A673 (cell line): ENCODE measurements at regions of chr5 and their contacts with region 1.

Region 1: DNA sequence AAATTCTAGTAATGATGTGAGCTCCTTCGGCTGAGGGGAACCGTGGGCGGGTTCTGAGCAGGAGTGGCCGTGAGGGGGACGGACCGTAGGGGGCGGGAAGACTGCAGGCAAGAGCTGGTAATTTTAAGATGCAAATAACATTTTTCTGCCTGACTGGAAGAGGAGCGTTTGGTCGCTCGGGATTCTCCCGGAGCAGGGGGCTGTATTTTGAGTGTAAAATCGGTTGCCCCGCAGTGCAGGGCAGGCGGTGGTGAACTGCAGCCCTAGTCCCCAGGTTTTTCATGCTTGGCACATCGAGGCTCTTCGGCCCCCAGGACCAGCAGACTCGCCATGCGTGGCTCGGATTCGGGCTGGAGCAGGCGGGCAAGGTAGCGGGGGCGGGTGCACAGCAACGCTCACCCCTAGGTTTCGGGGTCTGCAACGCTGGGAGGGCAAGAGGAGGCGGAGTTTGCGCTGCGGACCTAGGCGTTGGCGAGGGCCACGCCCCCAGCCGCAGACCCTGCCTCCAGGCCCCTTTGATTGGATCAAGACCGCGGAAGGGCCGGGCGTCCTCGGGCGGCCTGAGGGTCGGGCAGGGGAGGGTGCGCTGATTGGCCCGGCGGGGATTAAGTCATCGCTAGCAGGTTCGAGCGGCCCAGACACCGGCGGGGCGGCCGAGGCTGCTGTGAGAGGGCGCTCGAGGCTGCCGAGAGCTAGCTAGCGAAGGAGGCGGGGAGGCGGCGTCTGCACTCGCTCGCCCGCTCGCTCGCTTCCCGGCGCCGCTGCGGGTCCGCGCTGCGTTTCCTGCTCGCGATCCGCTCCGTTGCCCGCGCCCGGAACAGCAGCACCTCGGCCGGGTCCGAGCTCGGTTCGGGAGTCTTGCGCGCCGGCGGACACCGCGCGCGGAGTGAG is at the start of gene ARHGAP26:
- DNase-seq: peak; percentile 98
- H3K4me3 ChIP-seq: peak within 1 kb of the TSS; percentile 66
- H3K27ac ChIP-seq: peak within 1 kb of the TSS; percentile 58
- H3K4me1 ChIP-seq: peaks cover 15% of the 10 kb centered on the region
- H3K27me3 ChIP-seq: no peaks in the 10 kb centered on the region
- CTCF ChIP-seq: no peak; the same call in 1 of the 2 replicates
- total RNA-seq, gene ARHGAP26: 25.5 and 25.8 TPM in 2 replicates

Region 2: GRCh38 chr5:142865414-142866045 is 95.5 kb after region 1 on chr5:
- CTCF ChIA-PET with region 1: interaction called, 5 read pairs
- POLR2A ChIA-PET with region 1: no interaction called
- intact Hi-C with region 1: loop called (anchors 2 kb)
- DNase-seq: no peak
- H3K4me3 ChIP-seq: no peak overlapping the region
- H3K27ac ChIP-seq: no peak overlapping the region
- H3K4me1 ChIP-seq: peaks cover 22% of the 10 kb centered on the region
- H3K27me3 ChIP-seq: no peaks in the 10 kb centered on the region
- CTCF ChIP-seq: no peak

Region 3: GRCh38 chr5:142874537-142874936 is 104.6 kb after region 1 on chr5:
- CTCF ChIA-PET with region 1: interaction called, 3 read pairs
- POLR2A ChIA-PET with region 1: no interaction called
- intact Hi-C with region 1: loop called (anchors 2 kb)
- DNase-seq: peak; percentile 35
- H3K4me3 ChIP-seq: no peak overlapping the region
- H3K27ac ChIP-seq: no peak overlapping the region
- H3K4me1 ChIP-seq: peaks cover 81% of the 10 kb centered on the region
- H3K27me3 ChIP-seq: no peaks in the 10 kb centered on the region
- CTCF ChIP-seq: no peak